Activated naive CD4-positive, alpha-beta T cell treated with anti-CD3 and anti-CD28 coated beads for 36 hours (primary cell): ENCODE measurements at regions of chr5 and their contacts with region 1.

Region 1: GRCh38 chr5:110441035-110441434 is 285.4 kb downstream of the TMEM232 start:
- DNase-seq: peak; percentile 13
- H3K4me3 Mint-ChIP-seq: no peak overlapping the region
- H3K27ac Mint-ChIP-seq: no peak overlapping the region
- H3K4me1 Mint-ChIP-seq: no peaks in the 10 kb centered on the region
- H3K27me3 Mint-ChIP-seq: peaks cover 6% of the 10 kb centered on the region

Region 2: GRCh38 chr5:110590187-110590586 is 149.2 kb after region 1 on chr5:
- CTCF ChIA-PET with region 1: no interaction called
- intact Hi-C with region 1: loop called (anchors 5 kb)
- DNase-seq: no peak
- H3K4me3 Mint-ChIP-seq: no peak overlapping the region
- H3K27ac Mint-ChIP-seq: no peak overlapping the region
- H3K4me1 Mint-ChIP-seq: no peaks in the 10 kb centered on the region
- H3K27me3 Mint-ChIP-seq: peaks cover 4% of the 10 kb centered on the region

Region 3: DNA sequence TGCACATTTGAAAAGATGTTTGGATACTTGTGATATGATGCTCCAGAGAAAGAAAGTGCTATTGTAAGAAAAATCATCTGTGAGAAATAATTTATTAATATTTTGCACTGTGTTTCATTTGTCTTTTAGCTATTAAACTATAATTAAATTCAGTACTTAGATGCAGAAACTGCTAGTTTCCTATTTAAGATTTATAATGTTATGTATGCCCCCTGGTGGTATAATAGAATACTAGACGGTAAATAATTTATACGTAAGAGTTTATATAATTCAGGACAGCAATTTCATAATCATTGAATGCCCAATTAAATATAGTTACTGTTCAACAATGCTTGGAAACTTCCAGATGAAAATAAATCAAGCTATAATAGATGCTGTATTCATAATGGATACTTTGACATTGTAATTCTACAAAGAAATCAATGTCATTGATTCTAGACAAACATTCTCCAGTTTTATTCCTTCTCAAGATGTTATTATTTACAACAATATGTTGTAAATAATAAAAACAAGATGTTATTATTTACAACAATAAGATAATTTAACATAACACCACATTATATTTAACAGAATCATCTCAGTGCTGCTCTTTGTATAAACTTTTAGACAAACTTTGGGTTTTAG is 184.5 kb after region 1 on chr5:
- CTCF ChIA-PET with region 1: no interaction called
- intact Hi-C with region 1: loop called (anchors 1 kb)
- DNase-seq: no peak
- H3K4me3 Mint-ChIP-seq: no peak overlapping the region
- H3K27ac Mint-ChIP-seq: no peak overlapping the region
- H3K4me1 Mint-ChIP-seq: no peaks in the 10 kb centered on the region
- H3K27me3 Mint-ChIP-seq: peaks cover 3% of the 10 kb centered on the region

Region 4: DNA sequence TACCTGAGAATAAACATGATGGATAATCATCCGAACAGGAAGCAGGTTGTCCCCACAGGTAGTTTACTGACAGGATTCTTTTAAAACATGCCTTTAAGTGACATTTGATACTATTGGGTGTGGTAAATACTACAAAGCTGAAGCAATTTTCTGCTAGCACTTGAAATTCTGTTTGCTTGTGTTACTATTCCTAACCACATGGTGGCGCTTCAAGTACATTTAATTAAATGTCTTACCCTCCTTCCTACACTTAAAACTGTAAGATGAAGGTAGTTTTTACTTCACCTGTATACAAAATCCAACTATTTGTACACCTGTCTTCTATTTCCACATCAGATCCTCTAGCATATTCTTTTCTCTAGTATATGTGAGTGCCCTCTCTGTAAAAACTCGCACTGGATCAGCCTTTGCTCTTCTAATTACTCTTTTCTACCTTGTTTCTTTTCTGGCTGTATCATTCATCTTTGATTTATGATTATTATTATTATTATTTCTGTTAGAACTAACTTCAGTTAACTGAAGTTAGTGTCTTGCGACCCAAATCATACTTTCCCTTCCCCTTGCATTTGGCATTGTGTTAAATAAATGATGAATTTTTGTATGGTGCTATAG is 316.2 kb after region 1 on chr5:
- CTCF ChIA-PET with region 1: no interaction called
- intact Hi-C with region 1: no loop called
- DNase-seq: peak; percentile 38
- H3K4me3 Mint-ChIP-seq: no peak overlapping the region
- H3K27ac Mint-ChIP-seq: no peak overlapping the region
- H3K4me1 Mint-ChIP-seq: peaks cover 26% of the 10 kb centered on the region
- H3K27me3 Mint-ChIP-seq: no peaks in the 10 kb centered on the region

Region 5: GRCh38 chr5:111299067-111299481 is 858.0 kb after region 1 on chr5:
- CTCF ChIA-PET with region 1: no interaction called
- intact Hi-C with region 1: no loop called
- DNase-seq: no peak
- H3K4me3 Mint-ChIP-seq: no peak overlapping the region
- H3K27ac Mint-ChIP-seq: peak overlapping the region; percentile 50
- H3K4me1 Mint-ChIP-seq: peaks cover 46% of the 10 kb centered on the region
- H3K27me3 Mint-ChIP-seq: no peaks in the 10 kb centered on the region